IMR-90 (cell line): ENCODE measurements at regions of chr2 and their contacts with region 1.

Region 1: GRCh38 chr2:188983427-188984064 is 9.4 kb downstream of the COL3A1 start:
- DNase-seq: peak; percentile 78
- ATAC-seq: no peak
- H3K4me3 ChIP-seq: no peak overlapping the region
- H3K27ac ChIP-seq: peak overlapping the region; percentile 25; the same call in 1 of the 2 replicates
- H3K4me1 ChIP-seq: peaks cover 4% of the 10 kb centered on the region
- H3K27me3 ChIP-seq: no peaks in the 10 kb centered on the region
- CTCF ChIP-seq: peak; percentile 34
- POLR2A ChIP-seq: no peak
- RAD21 ChIP-seq: no peak

Region 2: DNA sequence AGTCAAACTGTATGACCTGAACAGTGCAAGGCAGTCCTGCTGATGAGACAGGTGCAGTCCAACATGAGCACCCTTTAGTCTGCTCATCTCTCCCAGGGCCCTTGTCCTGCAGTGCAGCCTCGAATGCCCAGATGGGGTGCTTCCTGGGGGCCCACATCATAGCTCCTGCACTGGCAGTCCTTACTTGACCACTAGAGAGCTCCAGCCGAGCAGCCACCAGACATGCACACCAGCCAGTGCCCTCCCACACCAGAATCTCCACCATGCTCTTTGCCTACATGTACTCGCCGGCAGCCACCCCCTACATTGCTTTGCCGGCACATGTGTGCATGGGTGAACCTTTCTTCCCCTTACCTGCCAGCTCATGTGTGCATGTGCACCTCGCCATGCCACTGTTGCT is 880.7 kb before region 1 on chr2:
- CTCF ChIA-PET with region 1: no interaction called
- POLR2A ChIA-PET with region 1: no interaction called
- dilution Hi-C with region 1: no loop called
- in situ Hi-C with region 1: no loop called
- intact Hi-C with region 1: no loop called
- DNase-seq: no peak
- ATAC-seq: no peak
- H3K4me3 ChIP-seq: no peak overlapping the region
- H3K27ac ChIP-seq: no peak overlapping the region
- H3K4me1 ChIP-seq: no peaks in the 10 kb centered on the region
- H3K27me3 ChIP-seq: no peaks in the 10 kb centered on the region
- CTCF ChIP-seq: no peak
- POLR2A ChIP-seq: no peak
- RAD21 ChIP-seq: no peak

Region 3: DNA sequence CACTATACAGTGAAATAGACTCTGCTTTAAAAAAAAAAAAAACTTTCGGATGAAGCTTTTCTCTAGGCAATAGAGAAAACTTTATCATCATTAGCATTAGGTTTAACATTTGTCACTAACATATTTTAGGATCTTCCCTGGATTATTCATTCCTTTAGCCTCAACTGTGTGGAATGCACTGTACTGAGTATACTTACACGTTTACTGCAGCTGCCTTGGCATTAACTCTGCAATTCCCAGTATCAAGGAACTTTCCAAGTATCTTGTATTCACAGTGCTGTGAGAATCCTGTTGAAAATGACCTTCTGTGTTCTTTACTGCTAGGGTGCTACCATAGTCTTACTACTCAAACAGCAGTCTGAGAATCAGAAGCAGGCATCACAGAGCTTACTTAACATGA is 337.6 kb before region 1 on chr2:
- CTCF ChIA-PET with region 1: no interaction called
- POLR2A ChIA-PET with region 1: no interaction called
- dilution Hi-C with region 1: no loop called
- in situ Hi-C with region 1: no loop called
- intact Hi-C with region 1: loop called (anchors 5 kb)
- DNase-seq: peak; percentile 83
- ATAC-seq: peak; percentile 99
- H3K4me3 ChIP-seq: no peak overlapping the region
- H3K27ac ChIP-seq: no peak overlapping the region
- H3K4me1 ChIP-seq: peaks cover 3% of the 10 kb centered on the region
- H3K27me3 ChIP-seq: no peaks in the 10 kb centered on the region
- CTCF ChIP-seq: no peak
- POLR2A ChIP-seq: no peak
- RAD21 ChIP-seq: no peak

Region 4: DNA sequence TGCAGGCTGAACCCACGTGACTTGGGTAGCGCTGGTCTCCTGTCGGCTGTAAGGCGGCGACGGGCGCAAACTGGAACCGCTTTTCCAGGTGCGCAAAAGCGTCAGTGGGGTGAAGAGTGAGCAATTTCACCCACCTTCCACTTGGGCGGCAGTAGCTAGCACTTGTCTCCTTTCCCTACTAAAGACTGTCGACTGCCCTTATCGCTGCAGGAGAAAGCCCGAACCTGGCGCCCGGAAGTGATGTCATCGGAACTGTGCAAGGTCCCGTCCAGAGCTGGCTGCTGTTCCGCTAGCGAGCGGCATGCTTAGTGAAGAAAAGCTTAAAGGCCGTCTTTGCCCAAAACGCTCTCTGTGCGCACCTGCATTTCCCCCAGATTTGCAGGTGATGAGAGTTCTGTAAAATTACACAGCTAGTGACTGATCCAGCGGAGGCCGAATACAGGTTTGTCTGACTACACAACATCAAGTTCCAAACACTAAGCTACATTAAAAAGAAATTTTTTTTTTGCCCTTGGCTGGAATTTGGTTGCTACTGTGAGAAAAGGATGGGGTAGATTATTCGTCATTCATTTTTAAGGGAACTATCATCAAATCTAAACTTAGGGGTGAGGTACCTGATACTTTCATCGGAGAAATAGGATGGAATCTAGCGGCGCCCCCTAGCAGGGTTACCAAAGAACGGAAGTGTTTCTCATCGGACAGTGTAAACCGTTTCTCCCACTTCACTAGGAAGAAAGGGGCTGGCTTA is 779.2 kb after region 1 on chr2 and contains the start of gene OSGEPL1:
- CTCF ChIA-PET with region 1: no interaction called
- POLR2A ChIA-PET with region 1: no interaction called
- dilution Hi-C with region 1: no loop called
- in situ Hi-C with region 1: no loop called
- intact Hi-C with region 1: no loop called
- DNase-seq: peak; percentile 90
- ATAC-seq: peak; percentile 95
- H3K4me3 ChIP-seq: peak within 1 kb of the TSS; percentile 69
- H3K27ac ChIP-seq: peak within 1 kb of the TSS; percentile 72
- H3K4me1 ChIP-seq: no peaks in the 10 kb centered on the region
- H3K27me3 ChIP-seq: no peaks in the 10 kb centered on the region
- CTCF ChIP-seq: peak; percentile 61
- POLR2A ChIP-seq: 0 out of 2 replicates have a peak, but pooled peaks have one; percentile 26
- RAD21 ChIP-seq: no peak; the same call in 1 of the 2 replicates
- total RNA-seq, gene OSGEPL1: 6.8 and 8.3 TPM in 2 replicates